ENCODE measurements at regions of chr17 and their contacts with region 1.

Region 1: GRCh38 chr17:35148144-35148543 is 527 bp downstream of the UNC45B start:
- DNase-seq: peak in 1 of 2 donors; percentile 41
- ATAC-seq: peak; percentile 29 to 35
- H3K4me3 ChIP-seq: peak overlapping the region; percentile 53 to 64 (median 60)
- H3K27ac ChIP-seq: peak overlapping the region; percentile 94 to 98 (median 97)
- H3K4me1 ChIP-seq: peaks cover 23 to 39% of the 10 kb centered on the region in 2 donors
- H3K27me3 ChIP-seq: no peaks in the 10 kb centered on the region
- CTCF ChIP-seq: peak in 1 of 5 experiments; percentile 5
- POLR2A ChIP-seq: no peak

Region 2: GRCh38 chr17:35103271-35103670 is 44.9 kb before region 1 on chr17:
- in situ Hi-C with region 1: no loop called
- intact Hi-C with region 1: no loop called
- DNase-seq: no peak
- ATAC-seq: no peak
- H3K4me3 ChIP-seq: no peak overlapping the region
- H3K27ac ChIP-seq: no peak overlapping the region
- H3K4me1 ChIP-seq: no peaks in the 10 kb centered on the region
- H3K27me3 ChIP-seq: no peaks in the 10 kb centered on the region
- CTCF ChIP-seq: no peak
- POLR2A ChIP-seq: no peak

Region 3: DNA sequence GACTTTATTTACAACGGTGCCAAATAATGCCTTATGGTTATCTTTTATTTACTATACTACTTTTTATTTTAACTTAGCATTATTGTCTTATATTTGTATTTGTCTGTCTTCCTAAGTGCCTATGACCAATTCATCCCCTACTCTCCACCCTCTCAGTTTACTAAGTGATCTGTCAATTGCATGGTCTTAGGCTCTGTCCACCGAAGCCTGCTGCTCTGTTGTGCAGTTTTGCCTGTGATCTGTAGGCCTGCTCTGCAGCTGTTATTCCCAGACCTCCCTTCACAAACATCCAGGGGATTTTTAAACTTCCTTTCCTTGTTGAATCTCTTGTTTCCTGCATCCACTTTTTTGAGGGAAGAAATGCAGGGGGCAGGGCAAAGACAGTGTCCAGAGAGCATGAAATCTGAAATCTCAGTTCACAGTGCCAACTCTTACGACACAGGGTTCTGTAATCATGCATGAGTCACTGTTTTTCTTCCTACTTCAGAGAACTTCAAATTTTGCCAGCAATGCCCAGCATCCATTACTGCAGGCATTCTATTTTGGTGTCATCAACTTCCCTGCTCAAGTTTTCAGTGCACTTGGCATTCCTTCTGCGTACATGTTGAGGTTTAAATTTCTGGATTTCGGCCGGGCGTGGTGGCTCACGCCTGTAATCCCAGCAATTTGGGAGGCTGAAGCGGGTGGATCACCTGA is 106.1 kb after region 1 on chr17:
- in situ Hi-C with region 1: loop called in 2 of 4 experiments (anchors 10 kb)
- intact Hi-C with region 1: loop called (anchors 5 kb)
- DNase-seq: peak; percentile 82 to 85
- ATAC-seq: peak; percentile 98 to 99
- H3K4me3 ChIP-seq: no peak overlapping the region
- H3K27ac ChIP-seq: peak overlapping the region; percentile 65 to 81 (median 68)
- H3K4me1 ChIP-seq: peaks cover 26 to 42% of the 10 kb centered on the region in 2 donors
- H3K27me3 ChIP-seq: no peaks in the 10 kb centered on the region
- CTCF ChIP-seq: no peak
- POLR2A ChIP-seq: no peak

Measured in gastrocnemius medialis (tissue), 4 donors.